Caco-2 (cell line): ENCODE measurements at regions of chr15 and their contacts with region 1.

Region 1: DNA sequence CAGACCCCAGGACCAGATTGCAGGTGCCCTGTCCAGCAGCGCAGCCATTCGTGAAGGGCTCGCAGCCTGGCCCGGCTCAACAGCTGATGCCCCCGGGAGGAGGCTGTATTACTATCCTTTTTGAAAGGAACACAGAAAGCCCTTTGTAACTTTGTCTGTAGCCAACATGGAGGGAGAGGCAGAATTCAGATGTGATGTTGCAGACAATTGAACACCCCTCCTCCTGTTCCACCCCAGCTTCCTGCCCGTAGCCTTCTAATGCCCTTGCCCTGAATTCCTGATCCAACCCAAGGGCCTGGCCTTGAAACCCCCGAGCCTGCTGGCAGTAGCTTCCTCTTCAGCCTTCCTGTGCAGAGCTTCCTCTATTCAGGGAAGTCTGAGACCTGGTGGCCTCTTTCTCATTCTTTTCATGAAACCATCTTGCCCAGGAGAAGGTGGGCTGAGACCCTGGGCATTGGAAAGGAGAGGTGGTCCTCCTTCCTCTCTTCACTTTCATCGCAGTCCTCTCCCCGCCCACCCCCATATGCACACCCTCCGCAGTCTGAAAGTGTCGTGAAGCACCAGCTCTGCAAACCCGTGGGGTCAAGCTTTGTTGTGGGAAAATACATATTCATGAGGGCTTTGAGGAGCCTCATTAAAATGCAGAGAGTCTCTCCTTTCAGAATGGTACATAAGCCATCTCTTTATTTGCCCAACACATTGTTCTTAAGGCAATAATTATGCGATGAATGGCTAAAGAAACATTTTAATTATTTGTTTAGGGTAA is 109.2 kb downstream of the APBA2 start:
- DNase-seq: no peak
- H3K4me3 ChIP-seq: no peak overlapping the region
- H3K4me3 Mint-ChIP-seq: no peak overlapping the region
- H3K27ac Mint-ChIP-seq: no peak overlapping the region
- H3K4me1 ChIP-seq: no peaks in the 10 kb centered on the region
- H3K4me1 Mint-ChIP-seq: no peaks in the 10 kb centered on the region
- H3K27me3 ChIP-seq: no peaks in the 10 kb centered on the region; the same call in 1 of the 2 replicates
- H3K27me3 Mint-ChIP-seq: peaks cover 21% of the 10 kb centered on the region
- CTCF ChIP-seq: no peak

Region 2: DNA sequence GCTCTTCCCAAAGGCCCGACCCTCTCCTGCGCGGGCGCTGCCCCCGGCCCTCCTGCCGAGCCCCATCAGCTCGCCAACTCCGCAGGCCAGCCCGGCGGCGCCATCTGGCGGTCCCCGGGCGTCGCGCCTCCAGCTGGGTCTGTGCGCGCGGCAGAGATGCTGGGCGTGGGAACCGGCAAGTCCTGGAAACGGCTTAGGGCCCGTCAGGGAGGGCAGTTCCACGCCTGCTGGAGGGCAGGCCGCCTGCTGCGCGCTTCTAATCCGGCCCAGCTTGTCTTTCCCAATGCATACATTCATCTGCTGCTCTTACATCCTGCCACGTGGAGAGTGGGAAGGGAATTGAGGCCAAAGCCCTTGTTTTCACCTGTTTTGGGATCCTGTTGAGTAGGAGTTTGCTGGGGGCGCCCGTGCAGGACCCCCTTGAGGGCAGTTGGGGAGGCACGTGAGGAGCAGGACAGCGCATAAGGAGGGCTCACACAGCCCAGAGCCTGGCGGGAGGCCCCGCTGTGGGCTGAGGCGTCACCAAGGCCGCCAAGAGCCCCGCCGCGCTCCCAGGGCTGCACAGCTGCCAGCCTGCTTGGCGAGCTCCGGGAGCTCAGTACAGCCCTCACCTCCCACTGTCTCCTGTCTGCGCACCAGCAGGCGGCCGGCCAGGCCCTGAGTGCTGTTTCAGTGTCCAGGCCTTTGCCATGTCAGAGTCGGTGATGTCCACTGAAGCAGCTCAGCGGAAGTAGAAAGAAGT is 109.0 kb after region 1 on chr15:
- CTCF ChIA-PET with region 1: interaction called, 4 read pairs
- POLR2A ChIA-PET with region 1: no interaction called
- intact Hi-C with region 1: loop called (anchors 5 kb)
- DNase-seq: peak in 1 of 2 experiments; percentile 73
- H3K4me3 ChIP-seq: no peak overlapping the region
- H3K4me3 Mint-ChIP-seq: no peak overlapping the region
- H3K27ac Mint-ChIP-seq: no peak overlapping the region
- H3K4me1 ChIP-seq: no peaks in the 10 kb centered on the region
- H3K4me1 Mint-ChIP-seq: no peaks in the 10 kb centered on the region
- H3K27me3 ChIP-seq: no peaks in the 10 kb centered on the region
- H3K27me3 Mint-ChIP-seq: peaks cover 7% of the 10 kb centered on the region
- CTCF ChIP-seq: peak; percentile 53 to 68